ENCODE measurements at regions of chr4 and their contacts with region 1.

Region 1: GRCh38 chr4:6087673-6088341 is 69.6 kb upstream of the C4orf50 start:
- DNase-seq: no peak
- ATAC-seq: no peak
- H3K4me3 ChIP-seq: no peak overlapping the region
- H3K27ac ChIP-seq: no peak overlapping the region
- H3K4me1 ChIP-seq: no peaks in the 10 kb centered on the region
- H3K27me3 ChIP-seq: no peaks in the 10 kb centered on the region

Region 2: DNA sequence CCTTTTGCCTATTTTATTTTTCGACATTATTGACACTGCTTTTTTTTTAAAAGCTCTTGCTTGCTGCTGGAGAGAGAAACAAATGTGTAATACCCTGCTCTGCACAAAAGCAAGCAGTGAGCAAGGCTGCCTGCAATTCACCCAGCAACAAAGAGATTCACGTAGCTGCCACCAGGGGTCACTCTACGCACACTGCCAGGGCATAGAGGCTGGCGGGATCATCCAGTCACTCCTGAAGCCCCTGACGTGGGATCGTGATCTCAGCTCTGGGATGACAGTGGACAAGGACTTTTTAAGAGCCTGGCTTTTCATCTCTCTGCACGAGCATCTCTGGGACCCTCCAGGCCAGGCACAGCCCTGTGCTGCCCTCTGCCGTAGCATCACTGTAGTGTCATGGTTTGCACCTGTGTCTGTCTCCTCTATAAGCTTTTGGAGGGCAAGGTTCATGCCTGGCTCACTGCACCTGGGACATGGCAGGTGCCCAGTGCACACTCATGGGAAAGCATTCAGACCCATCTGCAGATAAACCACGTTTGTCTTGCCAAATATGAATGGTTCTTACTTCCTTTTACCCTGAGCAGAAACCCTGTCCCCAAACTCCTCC is 89.4 kb before region 1 on chr4:
- intact Hi-C with region 1: loop called in 1 of 2 experiments (anchors 5 kb)
- DNase-seq: peak in 1 of 2 donors; percentile 79
- ATAC-seq: no peak
- H3K4me3 ChIP-seq: no peak overlapping the region
- H3K27ac ChIP-seq: no peak overlapping the region
- H3K4me1 ChIP-seq: no peaks in the 10 kb centered on the region
- H3K27me3 ChIP-seq: no peaks in the 10 kb centered on the region